ENCODE measurements at regions of chr5 and their contacts with region 1.

Region 1: DNA sequence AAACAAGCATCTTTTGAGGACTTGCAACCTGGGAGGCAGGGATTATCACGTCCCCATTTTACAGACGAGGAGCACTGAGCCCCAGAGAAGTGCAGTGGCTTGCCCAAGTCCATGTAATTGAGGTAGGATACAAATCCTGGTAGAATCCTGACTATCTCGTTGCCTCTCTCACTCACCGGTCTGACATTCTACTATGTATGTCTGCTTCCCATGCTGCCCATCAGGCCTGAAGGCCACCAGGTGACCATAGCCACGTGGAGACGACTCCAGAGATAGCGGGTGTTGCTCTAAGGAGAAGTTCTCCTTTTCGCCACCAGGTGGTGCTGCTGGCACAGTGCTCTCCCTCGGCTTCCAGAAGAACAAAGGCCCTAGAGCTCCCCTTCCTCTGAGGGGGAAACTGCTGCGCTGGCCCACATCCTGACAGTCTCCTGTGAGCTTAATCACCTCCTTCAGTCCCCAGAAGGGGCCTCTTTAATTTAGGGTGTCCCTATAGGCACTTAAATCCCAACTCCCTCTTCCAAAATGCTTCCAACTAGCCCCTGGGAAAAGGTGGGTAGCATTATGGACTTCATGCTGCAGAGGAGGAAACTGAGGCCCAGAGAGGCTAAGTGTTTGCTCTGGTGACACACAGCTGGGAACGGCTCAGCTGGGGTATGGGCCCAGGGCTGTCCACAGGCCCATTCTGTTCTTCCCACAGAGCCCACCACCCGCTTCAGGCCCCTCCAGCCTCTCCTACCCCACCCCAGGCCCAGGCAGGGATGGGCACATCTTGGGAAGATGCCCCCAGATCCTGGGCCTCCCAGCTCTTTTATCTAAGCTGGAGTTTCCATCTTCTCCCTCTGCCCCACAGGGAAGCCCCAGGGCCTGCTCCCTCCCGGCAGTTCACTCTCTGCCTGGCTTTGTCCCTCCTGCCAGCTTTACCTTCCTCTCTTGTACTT is 6.4 kb downstream of the SLC34A1 start:
- DNase-seq: peak; percentile 80
- ATAC-seq: peak; percentile 87

Region 2: DNA sequence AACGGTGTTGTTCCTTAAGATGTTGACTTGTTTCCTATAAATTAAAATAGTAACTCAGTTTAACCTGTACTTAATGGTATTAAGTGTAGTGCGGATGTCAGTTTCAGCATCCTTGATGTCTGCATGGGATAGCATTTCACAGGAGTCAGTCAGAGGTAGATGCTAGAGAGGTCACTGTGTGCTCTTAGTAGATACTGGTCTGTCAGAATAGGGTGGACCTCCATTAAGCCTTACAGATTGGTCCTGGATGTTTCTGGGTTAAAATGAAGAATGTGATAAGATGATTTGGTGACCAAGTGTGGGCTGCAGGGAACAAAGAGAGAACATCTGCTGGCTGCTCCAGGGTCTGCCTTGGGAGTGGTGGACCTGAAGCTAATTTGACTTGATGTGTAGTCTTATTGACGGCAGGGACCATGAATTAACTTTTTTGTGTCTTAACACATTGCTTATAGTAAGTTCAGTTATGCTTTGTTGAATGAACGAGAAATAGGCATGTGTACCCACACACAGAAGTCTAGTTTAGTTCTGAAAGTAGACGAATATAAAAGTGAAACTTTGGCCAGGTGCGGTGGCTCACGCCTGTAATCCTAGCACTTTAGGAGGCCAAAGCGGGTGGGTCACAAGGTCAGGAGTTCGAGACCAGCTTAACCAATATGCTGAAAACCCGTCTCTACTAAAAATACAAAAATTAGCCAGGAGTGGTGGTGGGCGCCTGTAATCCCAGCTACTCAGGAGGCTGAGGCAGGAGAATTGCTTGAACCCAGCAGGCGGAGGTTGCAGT is 99.6 kb before region 1 on chr5:
- intact Hi-C with region 1: no loop called
- DNase-seq: no peak
- ATAC-seq: no peak

Region 3: GRCh38 chr5:177454397-177455035 is 63.9 kb after region 1 on chr5:
- intact Hi-C with region 1: loop called (anchors 5 kb)
- DNase-seq: peak; percentile 95
- ATAC-seq: peak; percentile 73

Region 4: GRCh38 chr5:177500685-177501522 is 110.3 kb after region 1 on chr5:
- intact Hi-C with region 1: loop called (anchors 5 kb)
- DNase-seq: peak; percentile 97
- ATAC-seq: peak; percentile 33

Region 5: GRCh38 chr5:177599731-177600507 is 209.3 kb after region 1 on chr5 and contains the start of gene B4GALT7:
- intact Hi-C with region 1: no loop called
- DNase-seq: peak; percentile 93
- ATAC-seq: peak; percentile 98
- total RNA-seq, gene B4GALT7: 15.4 TPM

Measured in left ventricle myocardium superior (tissue), 1 donor.